CD8-positive, alpha-beta T cell (primary cell): ENCODE measurements at regions of chr1 and their contacts with region 1.

Region 1: DNA sequence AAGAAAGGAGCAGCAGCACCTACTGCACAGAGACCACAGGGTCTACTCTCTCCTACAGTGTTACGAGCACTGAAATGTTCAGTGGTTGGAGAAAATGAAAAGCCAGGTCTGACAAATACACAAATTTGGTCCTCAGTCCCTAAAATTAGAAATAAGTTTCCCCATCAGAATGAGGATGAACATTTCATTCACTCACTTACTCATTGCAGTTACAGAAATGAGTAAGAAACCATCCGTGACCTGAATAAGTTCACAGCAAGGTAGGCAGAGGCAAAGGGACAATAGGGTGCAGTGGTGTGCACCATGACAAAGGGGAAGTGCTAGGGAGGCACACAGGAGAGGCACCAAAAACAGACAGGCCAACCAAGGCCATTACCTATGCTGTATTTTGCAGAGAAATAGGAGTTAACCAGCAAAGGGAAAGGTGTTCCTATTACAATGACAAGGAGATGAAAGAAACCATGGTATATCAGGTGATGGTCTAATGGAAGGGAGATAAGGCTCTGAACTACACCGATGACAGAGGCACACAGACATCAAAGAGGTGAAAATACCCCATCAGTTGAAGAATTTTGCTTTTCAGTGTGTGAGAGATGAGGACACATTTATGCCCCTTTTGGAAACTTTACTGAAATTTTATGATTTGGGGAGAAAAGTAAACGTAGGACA is 29.4 kb downstream of the VAV3 start:
- DNase-seq: peak in 2 of 9 experiments; percentile 25 to 55
- ATAC-seq: peak; percentile 19
- H3K4me3 ChIP-seq: no peak overlapping the region
- H3K4me3 Mint-ChIP-seq: peak overlapping the region; percentile 52
- H3K27ac ChIP-seq: peak overlapping the region in 1 of 2 experiments; percentile 36
- H3K27ac Mint-ChIP-seq: peak overlapping the region; percentile 50
- H3K4me1 ChIP-seq: peaks cover 32% of the 10 kb centered on the region
- H3K4me1 Mint-ChIP-seq: peaks cover 54% of the 10 kb centered on the region
- H3K27me3 ChIP-seq: no peaks in the 10 kb centered on the region
- H3K27me3 Mint-ChIP-seq: no peaks in the 10 kb centered on the region
- CTCF ChIP-seq: no peak

Region 2: GRCh38 chr1:107949467-107950253 is 14.1 kb after region 1 on chr1:
- CTCF ChIA-PET with region 1: interaction called, 3 read pairs
- POLR2A ChIA-PET with region 1: interaction called, 3 read pairs
- intact Hi-C with region 1: loop called in 1 of 2 experiments (anchors 2 kb)
- DNase-seq: no peak
- ATAC-seq: no peak
- H3K4me3 ChIP-seq: no peak overlapping the region
- H3K4me3 Mint-ChIP-seq: no peak overlapping the region
- H3K27ac ChIP-seq: peak overlapping the region in 1 of 2 experiments; percentile 37
- H3K27ac Mint-ChIP-seq: no peak overlapping the region
- H3K4me1 ChIP-seq: peaks cover 15% of the 10 kb centered on the region
- H3K4me1 Mint-ChIP-seq: peaks cover 52% of the 10 kb centered on the region
- H3K27me3 ChIP-seq: no peaks in the 10 kb centered on the region
- H3K27me3 Mint-ChIP-seq: no peaks in the 10 kb centered on the region
- CTCF ChIP-seq: no peak

Region 3: DNA sequence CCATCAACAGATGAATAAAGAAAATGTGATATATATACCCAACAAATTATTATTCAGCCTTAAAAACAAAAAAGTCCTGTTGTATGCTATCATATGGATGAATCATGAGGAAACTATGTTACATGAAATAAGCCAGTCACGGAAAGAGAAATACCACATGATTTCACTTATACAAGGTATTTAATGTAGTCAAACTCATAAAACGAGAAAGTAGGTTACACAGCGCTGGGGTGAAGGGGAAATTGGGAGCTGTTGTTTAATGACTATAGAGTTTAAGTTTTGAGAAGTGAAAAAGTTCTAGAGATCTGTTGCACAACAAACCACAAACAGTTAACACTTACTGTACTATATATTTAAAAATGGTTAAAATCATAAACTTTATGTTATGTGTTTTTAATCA is 206.1 kb after region 1 on chr1:
- CTCF ChIA-PET with region 1: no interaction called
- POLR2A ChIA-PET with region 1: no interaction called
- intact Hi-C with region 1: no loop called
- DNase-seq: no peak
- ATAC-seq: no peak
- H3K4me3 ChIP-seq: no peak overlapping the region
- H3K4me3 Mint-ChIP-seq: no peak overlapping the region
- H3K27ac ChIP-seq: no peak overlapping the region
- H3K27ac Mint-ChIP-seq: no peak overlapping the region
- H3K4me1 ChIP-seq: no peaks in the 10 kb centered on the region
- H3K4me1 Mint-ChIP-seq: no peaks in the 10 kb centered on the region
- H3K27me3 ChIP-seq: no peaks in the 10 kb centered on the region
- H3K27me3 Mint-ChIP-seq: no peaks in the 10 kb centered on the region
- CTCF ChIP-seq: no peak